ENCODE measurements at regions of chr17 and their contacts with region 1.

Region 1: DNA sequence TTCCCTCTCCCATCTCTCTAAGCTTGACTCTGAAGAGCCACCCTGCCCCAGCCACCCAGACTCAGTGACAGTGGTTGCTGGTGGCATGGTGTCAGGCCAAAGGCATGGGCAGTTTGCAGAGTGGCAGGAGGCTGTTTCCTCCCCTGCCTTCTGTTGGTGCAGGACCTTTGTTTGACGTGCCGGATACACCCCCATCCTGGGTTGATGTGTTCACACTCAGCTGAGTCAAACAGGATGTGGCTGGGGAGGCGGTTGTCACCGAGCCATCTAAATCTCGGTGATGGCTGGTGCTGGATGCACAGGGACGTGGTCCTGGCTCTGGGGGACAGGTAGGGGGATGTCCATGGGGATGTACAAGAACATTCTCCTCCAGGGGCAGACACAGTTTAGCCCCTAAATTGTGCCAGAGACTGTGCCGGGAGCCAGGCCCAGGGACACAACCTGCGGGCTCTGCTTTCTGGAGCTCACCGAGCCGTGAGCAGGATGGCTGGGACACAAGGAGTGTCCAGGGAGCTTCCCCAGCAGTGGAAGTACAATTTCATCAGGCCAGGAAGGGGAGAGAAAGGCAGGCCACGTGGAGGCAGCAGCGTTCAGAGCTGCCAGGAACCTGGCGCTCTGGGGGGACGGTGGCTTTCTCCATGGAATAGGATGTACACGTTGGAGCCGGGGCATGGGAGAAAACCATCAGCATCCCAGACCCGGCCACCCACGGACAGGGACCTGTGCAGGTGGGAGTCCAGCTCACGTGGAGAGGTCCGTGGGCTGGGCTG is 264.2 kb downstream of the SEC14L1 start:
- DNase-seq: peak; percentile 60
- ATAC-seq: peak; percentile 70
- H3K4me3 Mint-ChIP-seq: peak overlapping the region; percentile 89
- H3K27ac Mint-ChIP-seq: peak overlapping the region; percentile 96
- H3K4me1 Mint-ChIP-seq: peaks cover 94% of the 10 kb centered on the region
- H3K27me3 Mint-ChIP-seq: no peaks in the 10 kb centered on the region
- CTCF ChIP-seq: no peak

Region 2: GRCh38 chr17:77331301-77331864 is 73.6 kb before region 1 on chr17:
- CTCF ChIA-PET with region 1: interaction called, 40 read pairs
- POLR2A ChIA-PET with region 1: interaction called, 37 read pairs
- intact Hi-C with region 1: loop called (anchors 1 kb)
- DNase-seq: peak; percentile 90
- ATAC-seq: peak; percentile 91
- H3K4me3 Mint-ChIP-seq: peak overlapping the region; percentile 76
- H3K27ac Mint-ChIP-seq: peak overlapping the region; percentile 78
- H3K4me1 Mint-ChIP-seq: peaks cover 57% of the 10 kb centered on the region
- H3K27me3 Mint-ChIP-seq: no peaks in the 10 kb centered on the region
- CTCF ChIP-seq: peak; percentile 32

Region 3: GRCh38 chr17:77420804-77421629 is 16.0 kb after region 1 on chr17:
- CTCF ChIA-PET with region 1: interaction called, 9 read pairs
- POLR2A ChIA-PET with region 1: interaction called, 51 read pairs
- intact Hi-C with region 1: no loop called
- DNase-seq: no peak
- ATAC-seq: peak; percentile 49
- H3K4me3 Mint-ChIP-seq: peak overlapping the region; percentile 73
- H3K27ac Mint-ChIP-seq: peak overlapping the region; percentile 55
- H3K4me1 Mint-ChIP-seq: peaks cover 33% of the 10 kb centered on the region
- H3K27me3 Mint-ChIP-seq: no peaks in the 10 kb centered on the region
- CTCF ChIP-seq: no peak

Region 4: DNA sequence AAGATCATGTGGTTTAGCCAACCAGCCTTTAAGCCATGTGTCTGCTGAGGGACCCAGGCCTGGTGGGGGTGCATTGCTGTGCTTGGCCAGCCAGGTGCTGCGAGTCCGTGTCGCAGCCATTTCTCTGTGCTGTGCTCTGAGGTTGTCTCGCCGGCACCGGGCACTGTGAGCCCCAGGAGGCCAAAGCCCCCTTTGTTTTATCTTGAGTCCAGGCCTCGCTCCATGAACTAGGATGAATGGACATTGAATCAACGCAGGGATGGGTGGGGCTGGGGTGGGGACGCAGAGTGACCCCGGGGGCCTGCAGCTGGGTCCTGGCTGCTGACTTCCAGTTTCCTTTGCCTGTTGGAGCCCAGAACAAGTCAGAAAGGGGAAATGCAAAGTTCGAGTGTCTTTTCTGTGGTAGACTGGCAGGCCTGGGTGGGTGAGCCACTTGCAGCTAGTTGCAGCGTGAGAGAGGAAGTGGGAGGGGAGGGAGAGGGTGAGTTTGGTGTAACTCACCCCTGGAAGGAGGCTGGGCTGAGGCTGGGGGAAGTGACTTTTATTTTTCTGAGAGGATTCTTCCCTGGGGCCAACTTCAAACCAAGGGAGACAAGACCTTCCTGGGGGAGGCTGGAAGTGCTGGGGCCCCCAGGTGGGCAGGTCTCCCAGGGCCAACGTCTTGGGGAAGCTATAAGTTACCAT is 60.5 kb after region 1 on chr17:
- CTCF ChIA-PET with region 1: interaction called, 4 read pairs
- POLR2A ChIA-PET with region 1: interaction called, 27 read pairs
- intact Hi-C with region 1: loop called (anchors 2 kb)
- DNase-seq: peak; percentile 62
- ATAC-seq: peak; percentile 81
- H3K4me3 Mint-ChIP-seq: peak overlapping the region; percentile 75
- H3K27ac Mint-ChIP-seq: peak overlapping the region; percentile 93
- H3K4me1 Mint-ChIP-seq: peaks cover 94% of the 10 kb centered on the region
- H3K27me3 Mint-ChIP-seq: no peaks in the 10 kb centered on the region
- CTCF ChIP-seq: no peak

Region 5: DNA sequence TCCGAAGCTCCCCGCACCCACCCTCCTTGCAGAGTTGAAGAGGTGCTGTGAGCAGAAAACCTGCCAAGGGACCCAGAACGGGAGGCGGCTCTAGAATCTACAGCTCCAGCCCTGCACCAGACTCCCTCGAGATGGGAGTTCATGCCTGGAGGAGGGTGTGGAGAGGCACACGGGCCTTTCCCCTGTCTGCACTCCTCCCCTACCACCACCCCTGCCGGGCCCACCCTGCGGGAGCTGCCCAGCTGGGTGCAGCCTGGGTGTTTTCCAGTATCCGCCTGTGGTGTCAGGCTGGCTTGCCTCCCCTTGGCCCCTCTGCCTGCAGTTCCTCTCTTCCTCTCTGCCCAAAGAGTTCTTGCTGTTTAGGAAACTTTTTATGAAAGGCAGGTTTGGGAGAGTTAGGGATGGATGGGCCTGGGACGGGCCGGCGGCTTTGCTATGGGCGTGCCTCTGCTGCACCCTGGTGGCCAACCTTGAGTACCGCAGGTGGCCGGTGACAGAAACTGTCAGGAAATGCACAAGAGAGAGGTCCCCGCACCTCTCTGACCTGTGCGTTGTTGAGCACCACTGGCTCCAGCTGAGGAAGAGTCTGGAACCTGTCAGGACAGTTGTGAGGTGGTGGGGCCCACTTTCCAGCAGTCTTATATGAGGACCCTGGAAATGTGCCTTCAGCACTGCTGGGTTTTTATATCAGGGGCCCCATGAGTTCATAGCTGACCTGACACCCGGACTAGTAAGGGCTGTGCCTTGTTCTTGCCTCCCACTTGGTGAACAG is 89.9 kb after region 1 on chr17:
- CTCF ChIA-PET with region 1: interaction called, 91 read pairs
- POLR2A ChIA-PET with region 1: interaction called, 26 read pairs
- intact Hi-C with region 1: loop called (anchors 1 kb)
- DNase-seq: peak; percentile 73
- ATAC-seq: peak; percentile 64
- H3K4me3 Mint-ChIP-seq: peak overlapping the region; percentile 15
- H3K27ac Mint-ChIP-seq: peak overlapping the region; percentile 77
- H3K4me1 Mint-ChIP-seq: peaks cover 27% of the 10 kb centered on the region
- H3K27me3 Mint-ChIP-seq: no peaks in the 10 kb centered on the region
- CTCF ChIP-seq: peak; percentile 77